Right ventricle myocardium inferior (tissue), 1 donor: ENCODE measurements at regions of chr3 and their contacts with region 1.

Region 1: GRCh38 chr3:14452679-14453367 is 50.4 kb downstream of the SLC6A6 start:
- DNase-seq: peak; percentile 92
- ATAC-seq: peak; percentile 95

Region 2: DNA sequence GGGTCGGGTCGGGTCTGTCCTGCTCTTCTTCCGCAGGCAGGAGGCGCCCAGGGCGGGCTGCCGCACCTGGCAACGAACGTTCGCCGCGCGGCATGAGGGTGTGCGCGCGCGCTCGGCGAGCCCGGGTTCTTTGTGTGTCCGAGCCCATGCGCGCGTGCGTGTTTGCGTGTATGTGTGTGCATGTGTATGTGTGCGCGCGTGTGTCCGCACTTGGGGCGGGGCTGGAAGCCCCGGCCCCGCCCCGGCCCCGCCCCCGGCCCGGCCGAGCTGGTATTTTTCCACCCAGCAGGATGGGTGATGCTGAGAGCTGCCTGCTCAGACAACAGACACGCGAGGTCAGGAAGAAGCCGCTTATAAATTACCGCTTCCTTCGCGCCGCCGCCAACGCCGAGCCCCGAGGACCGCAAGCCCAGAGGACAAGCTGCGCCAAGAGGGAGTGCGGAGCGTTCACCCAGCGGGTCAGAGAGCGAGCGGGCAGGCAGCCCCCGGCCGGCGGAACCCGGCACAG is 50.5 kb before region 1 on chr3 and contains the start of gene SLC6A6:
- intact Hi-C with region 1: loop called (anchors 2 kb)
- DNase-seq: peak; percentile 99
- ATAC-seq: peak; percentile 92
- total RNA-seq, gene SLC6A6: 14.3 TPM